ENCODE measurements at regions of chr7 and their contacts with region 1.

Region 1: GRCh38 chr7:157386979-157387800 is 50.4 kb downstream of the DNAJB6 start:
- DNase-seq: peak; percentile 69 to 85
- ATAC-seq: peak; percentile 89 to 93
- H3K4me3 ChIP-seq: no peak overlapping the region
- H3K27ac ChIP-seq: peak overlapping the region; percentile 14 to 36; a peak in 2 of 6 replicates
- H3K4me1 ChIP-seq: peaks cover 23% of the 10 kb centered on the region
- CTCF ChIP-seq: peak; percentile 90
- EP300 ChIP-seq: no peak
- POLR2A ChIP-seq: no peak
- RAD21 ChIP-seq: peak; percentile 56 to 68; a peak in 4 of 5 replicates

Region 2: GRCh38 chr7:156515911-156516790 is 871.0 kb before region 1 on chr7:
- CTCF ChIA-PET with region 1: no interaction called
- POLR2A ChIA-PET with region 1: no interaction called
- DNase-seq: no peak
- ATAC-seq: peak; percentile 23 to 67; a peak in 3 of 6 replicates
- H3K4me3 ChIP-seq: no peak overlapping the region
- H3K27ac ChIP-seq: no peak overlapping the region
- H3K4me1 ChIP-seq: 0 out of 3 replicates have a peak, but pooled peaks cover 3% of the 10 kb centered on the region
- CTCF ChIP-seq: no peak
- EP300 ChIP-seq: no peak
- POLR2A ChIP-seq: no peak
- RAD21 ChIP-seq: no peak

Region 3: GRCh38 chr7:156589808-156590207 is 797.4 kb before region 1 on chr7:
- CTCF ChIA-PET with region 1: no interaction called
- POLR2A ChIA-PET with region 1: no interaction called
- DNase-seq: no peak
- ATAC-seq: no peak
- H3K4me3 ChIP-seq: no peak overlapping the region
- H3K27ac ChIP-seq: no peak overlapping the region
- H3K4me1 ChIP-seq: no peaks in the 10 kb centered on the region
- CTCF ChIP-seq: no peak
- EP300 ChIP-seq: no peak
- POLR2A ChIP-seq: no peak
- RAD21 ChIP-seq: no peak

Region 4: GRCh38 chr7:157027568-157028198 is 359.5 kb before region 1 on chr7:
- CTCF ChIA-PET with region 1: no interaction called
- POLR2A ChIA-PET with region 1: no interaction called
- DNase-seq: no peak
- ATAC-seq: peak in 1 of 2 experiments; percentile 42; a peak in 3 of 6 replicates
- H3K4me3 ChIP-seq: no peak overlapping the region
- H3K27ac ChIP-seq: no peak overlapping the region
- H3K4me1 ChIP-seq: peaks cover 11% of the 10 kb centered on the region
- CTCF ChIP-seq: no peak
- EP300 ChIP-seq: no peak
- POLR2A ChIP-seq: no peak
- RAD21 ChIP-seq: no peak

Region 5: GRCh38 chr7:157372235-157373232 is 14.7 kb before region 1 on chr7:
- CTCF ChIA-PET with region 1: interaction called, 13 read pairs
- POLR2A ChIA-PET with region 1: no interaction called
- DNase-seq: no peak
- ATAC-seq: peak; percentile 26 to 48
- H3K4me3 ChIP-seq: no peak overlapping the region
- H3K27ac ChIP-seq: no peak overlapping the region
- H3K4me1 ChIP-seq: no peaks in the 10 kb centered on the region
- CTCF ChIP-seq: no peak
- EP300 ChIP-seq: no peak
- POLR2A ChIP-seq: no peak
- RAD21 ChIP-seq: no peak

Region 6: DNA sequence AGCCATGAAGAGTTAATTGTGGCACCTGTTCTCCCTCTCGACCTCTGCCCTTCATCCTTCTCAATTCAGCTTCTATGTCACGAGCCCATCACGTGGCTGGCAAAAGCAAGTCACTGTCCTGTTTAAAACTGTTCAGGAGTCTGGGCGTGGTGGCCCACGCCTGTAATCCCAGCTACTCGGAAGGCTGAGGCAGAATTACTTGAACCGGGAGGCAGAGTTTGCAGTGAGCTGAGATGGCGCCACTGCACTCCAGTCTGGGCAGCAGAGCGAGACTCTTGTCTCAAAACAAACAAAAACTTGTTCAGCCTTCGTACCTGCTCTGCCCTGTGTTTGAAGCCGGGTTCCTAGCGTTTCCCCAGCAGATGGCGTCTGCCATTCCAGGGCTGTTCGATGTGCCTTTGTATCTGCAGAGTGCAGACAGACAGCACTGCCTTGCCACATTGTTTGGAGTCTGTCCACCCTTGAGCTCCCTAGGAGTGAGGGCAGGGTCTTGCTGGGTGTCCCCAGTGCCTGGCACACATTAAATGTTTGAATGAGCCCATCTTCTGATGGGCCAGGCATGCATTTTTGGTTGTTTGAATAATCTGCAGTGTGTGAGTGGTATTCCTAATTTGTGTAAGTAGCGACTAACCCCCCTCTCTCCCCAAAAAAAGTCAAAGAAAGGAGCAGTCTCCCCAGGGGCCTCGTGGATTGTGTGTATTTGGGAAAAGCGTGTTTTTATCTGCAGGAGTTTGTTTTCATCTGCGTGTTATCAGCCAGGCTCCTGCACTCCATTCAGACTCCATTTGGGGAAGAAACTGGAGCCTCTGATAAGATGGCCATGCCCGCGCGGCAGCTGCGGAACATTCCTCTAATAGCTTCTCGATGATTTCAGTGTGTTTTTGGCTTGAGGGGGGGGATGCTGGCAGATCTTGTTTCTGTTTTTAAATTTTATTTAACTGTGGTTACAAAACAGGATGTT is 10.8 kb after region 1 on chr7:
- CTCF ChIA-PET with region 1: interaction called, 29 read pairs
- POLR2A ChIA-PET with region 1: no interaction called
- DNase-seq: peak; percentile 59 to 70
- ATAC-seq: peak; percentile 86 to 92
- H3K4me3 ChIP-seq: no peak overlapping the region
- H3K27ac ChIP-seq: peak overlapping the region in 1 of 2 experiments; percentile 50; a peak in 4 of 6 replicates
- H3K4me1 ChIP-seq: peaks cover 13% of the 10 kb centered on the region
- CTCF ChIP-seq: peak; percentile 76
- EP300 ChIP-seq: no peak
- POLR2A ChIP-seq: no peak
- RAD21 ChIP-seq: peak; percentile 23 to 33; a peak in 2 of 5 replicates

Region 7: GRCh38 chr7:157404845-157405481 is 17.8 kb after region 1 on chr7:
- CTCF ChIA-PET with region 1: interaction called, 29 read pairs
- POLR2A ChIA-PET with region 1: no interaction called
- DNase-seq: peak; percentile 71 to 77
- ATAC-seq: peak; percentile 68 to 78
- H3K4me3 ChIP-seq: no peak overlapping the region
- H3K27ac ChIP-seq: peak overlapping the region; percentile 39 to 74; a peak in 4 of 6 replicates
- H3K4me1 ChIP-seq: peaks cover 16% of the 10 kb centered on the region
- CTCF ChIP-seq: no peak
- EP300 ChIP-seq: no peak
- POLR2A ChIP-seq: no peak
- RAD21 ChIP-seq: no peak

Region 8: GRCh38 chr7:157974410-157975230 is 587.4 kb after region 1 on chr7:
- CTCF ChIA-PET with region 1: no interaction called
- POLR2A ChIA-PET with region 1: no interaction called
- DNase-seq: no peak
- ATAC-seq: no peak
- H3K4me3 ChIP-seq: no peak overlapping the region
- H3K27ac ChIP-seq: no peak overlapping the region
- H3K4me1 ChIP-seq: no peaks in the 10 kb centered on the region
- CTCF ChIP-seq: no peak
- EP300 ChIP-seq: no peak
- POLR2A ChIP-seq: no peak
- RAD21 ChIP-seq: no peak

Measured in A549 (cell line).